Posterior cingulate gyrus (tissue), 11 donors: ENCODE measurements at regions of chr15 and their contacts with region 1.

Region 1: DNA sequence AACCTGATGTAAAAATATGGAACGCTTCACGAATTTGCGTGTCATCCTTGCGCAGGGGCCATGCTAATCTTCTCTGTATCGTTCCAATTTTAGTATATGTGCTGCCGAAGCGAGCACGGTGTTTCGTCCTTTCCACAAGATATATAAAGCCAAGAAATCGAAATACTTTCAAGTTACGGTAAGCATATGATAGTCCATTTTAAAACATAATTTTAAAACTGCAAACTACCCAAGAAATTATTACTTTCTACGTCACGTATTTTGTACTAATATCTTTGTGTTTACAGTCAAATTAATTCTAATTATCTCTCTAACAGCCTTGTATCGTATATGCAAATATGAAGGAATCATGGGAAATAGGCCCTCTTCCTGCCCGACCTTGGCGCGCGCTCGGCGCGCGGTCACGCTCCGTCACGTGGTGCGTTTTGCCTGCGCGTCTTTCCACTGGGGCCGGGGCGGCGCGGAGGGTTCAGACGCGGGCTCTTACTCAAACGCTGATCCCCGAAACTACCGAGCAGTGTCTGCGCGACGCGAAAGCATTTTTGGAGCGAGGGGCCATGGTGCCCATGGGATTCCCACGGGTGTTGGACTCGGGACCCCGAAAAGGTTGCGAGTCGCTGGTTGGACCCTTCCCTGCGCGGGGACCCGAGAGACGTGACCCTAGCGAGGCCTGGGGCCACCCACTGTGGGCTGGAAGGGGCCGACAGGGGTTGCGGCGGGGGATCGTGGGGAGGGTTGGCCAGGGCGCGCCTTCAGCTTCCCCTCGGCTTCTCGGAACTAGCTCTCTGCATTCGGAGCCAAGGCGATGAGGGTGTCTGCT is at the start of gene RNU6-1:
- DNase-seq: peak; percentile 91 to 99 (median 93)

Region 2: GRCh38 chr15:66946578-66947164 is 893.5 kb before region 1 on chr15:
- intact Hi-C with region 1: loop called (anchors 2 kb)
- DNase-seq: peak in 8 of 10 donors; percentile 59 to 94 (median 68)

Region 3: DNA sequence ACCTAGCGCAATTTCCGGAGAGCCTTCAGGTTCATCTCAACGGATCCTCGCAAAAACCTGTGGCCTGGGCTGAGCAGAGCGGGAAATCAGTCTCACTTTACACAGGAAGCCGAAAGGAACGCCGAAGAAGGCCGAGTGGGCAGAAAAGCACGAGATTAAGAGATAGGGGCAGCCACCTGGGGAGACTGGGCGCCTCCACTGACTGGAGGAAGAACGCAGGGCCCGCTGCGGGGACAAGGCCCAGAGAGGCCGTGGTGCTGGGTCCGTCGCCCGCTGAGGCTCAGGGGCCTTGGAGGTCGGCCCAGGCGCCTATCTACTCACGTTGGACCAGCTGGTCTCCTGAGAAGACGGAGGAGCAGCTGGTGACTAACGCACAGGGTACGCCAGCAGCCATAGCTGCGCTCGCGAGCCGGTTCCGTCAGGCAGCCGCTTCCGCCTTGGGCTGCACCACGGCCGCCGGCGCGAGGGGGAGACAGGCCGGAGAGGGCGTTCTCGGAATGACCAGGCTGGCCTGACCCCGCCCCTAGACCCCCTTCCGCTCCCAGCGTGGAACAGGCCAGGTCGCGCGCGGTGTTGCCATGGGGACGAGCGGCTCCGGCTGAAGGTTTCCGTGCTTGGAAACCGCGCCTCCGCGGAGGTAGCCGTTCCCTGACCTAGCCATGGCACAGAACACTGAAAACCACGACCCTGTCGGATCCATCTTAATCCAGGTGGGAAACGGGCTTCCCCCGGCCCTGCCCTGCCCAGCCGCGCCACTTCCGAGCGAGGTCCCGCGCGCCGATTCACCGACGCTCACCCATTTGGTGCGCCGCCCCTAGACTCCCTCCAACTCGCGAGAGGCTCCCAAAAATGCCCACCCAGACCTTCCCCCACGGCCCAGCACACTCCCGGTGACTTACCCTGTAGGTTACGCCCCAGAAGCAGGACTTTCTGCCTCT is 585.6 kb before region 1 on chr15 and contains the starts of genes AAGAB and IQCH:
- intact Hi-C with region 1: loop called (anchors 10 kb)
- DNase-seq: peak; percentile 93 to 100 (median 98)

Region 4: DNA sequence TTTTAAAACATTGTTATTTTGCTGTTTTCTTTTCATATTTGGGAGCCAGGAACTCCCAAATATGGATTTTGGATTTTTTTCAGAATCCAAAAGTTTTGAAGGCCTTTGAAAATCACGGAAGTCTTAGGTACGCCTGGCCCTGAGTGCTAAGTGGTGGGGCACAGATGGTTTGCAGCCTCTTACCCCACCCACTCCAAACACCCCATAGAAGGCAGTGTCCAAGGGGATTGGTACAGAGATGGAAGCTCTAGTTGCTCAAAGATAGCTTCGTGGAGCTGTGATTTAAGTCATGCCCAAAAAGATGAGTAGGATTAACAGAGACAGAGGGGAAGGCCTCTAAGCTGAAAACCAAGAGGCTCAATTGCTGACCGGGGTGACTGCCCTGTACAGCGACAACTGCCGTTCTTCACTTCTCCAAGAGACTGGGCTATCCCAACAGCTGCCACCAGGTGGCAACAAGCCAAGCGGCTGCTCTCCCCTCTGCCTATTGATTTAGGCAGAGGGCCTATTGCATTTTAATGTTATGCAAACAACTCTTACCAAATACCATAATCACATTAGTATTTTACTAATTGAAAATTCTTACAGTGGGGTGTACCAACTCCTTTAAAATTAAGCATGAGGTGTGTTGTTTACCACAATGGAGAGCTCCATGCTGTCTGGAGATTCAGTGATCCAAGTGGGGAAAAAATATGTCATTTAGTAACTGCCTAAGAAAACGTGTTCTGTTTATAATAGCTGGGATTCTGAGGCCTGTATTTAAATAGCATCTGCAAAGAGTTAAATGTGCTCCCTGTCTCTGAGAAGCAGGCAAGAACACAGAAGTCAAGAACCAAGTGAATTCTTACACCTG is 383.2 kb before region 1 on chr15:
- intact Hi-C with region 1: loop called (anchors 2 kb)
- DNase-seq: peak; percentile 45 to 96 (median 82)

Region 5: GRCh38 chr15:67501177-67501835 is 338.8 kb before region 1 on chr15:
- intact Hi-C with region 1: loop called (anchors 2 kb)
- DNase-seq: no peak

Region 6: DNA sequence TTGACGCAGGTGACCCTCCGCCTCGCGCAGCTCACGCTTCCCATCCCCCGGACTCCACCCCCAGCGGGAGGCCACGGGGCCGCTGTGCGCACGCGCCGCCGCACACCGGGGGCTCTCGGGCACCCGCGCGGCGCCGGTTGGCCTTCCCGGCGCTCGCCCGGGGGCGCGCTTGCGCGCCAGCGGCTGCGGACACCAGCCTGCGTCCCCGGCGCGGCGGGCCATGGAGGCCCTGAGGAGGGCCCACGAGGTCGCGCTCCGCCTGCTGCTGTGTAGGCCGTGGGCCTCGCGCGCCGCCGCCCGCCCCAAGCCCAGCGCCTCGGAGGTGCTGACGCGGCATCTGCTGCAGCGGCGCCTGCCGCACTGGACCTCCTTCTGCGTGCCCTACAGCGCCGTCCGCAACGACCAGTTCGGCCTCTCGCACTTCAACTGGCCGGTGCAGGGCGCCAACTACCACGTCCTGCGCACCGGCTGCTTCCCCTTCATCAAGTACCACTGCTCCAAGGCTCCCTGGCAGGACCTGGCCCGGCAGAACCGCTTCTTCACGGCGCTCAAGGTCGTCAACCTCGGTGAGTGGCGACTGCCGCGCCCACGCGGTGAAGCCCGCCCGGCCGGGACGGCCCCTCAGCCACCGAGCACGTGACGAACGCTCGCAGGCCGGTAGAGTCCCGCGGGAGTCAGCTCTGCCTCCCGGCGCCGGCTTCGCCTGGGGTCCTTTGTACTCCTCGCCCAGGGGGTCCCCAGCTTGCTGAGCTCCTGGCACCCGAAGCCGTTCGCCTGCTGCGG is 318.9 kb before region 1 on chr15 and contains the start of gene C15orf61:
- intact Hi-C with region 1: loop called (anchors 1 kb)
- DNase-seq: peak; percentile 78 to 97 (median 81)

Region 7: DNA sequence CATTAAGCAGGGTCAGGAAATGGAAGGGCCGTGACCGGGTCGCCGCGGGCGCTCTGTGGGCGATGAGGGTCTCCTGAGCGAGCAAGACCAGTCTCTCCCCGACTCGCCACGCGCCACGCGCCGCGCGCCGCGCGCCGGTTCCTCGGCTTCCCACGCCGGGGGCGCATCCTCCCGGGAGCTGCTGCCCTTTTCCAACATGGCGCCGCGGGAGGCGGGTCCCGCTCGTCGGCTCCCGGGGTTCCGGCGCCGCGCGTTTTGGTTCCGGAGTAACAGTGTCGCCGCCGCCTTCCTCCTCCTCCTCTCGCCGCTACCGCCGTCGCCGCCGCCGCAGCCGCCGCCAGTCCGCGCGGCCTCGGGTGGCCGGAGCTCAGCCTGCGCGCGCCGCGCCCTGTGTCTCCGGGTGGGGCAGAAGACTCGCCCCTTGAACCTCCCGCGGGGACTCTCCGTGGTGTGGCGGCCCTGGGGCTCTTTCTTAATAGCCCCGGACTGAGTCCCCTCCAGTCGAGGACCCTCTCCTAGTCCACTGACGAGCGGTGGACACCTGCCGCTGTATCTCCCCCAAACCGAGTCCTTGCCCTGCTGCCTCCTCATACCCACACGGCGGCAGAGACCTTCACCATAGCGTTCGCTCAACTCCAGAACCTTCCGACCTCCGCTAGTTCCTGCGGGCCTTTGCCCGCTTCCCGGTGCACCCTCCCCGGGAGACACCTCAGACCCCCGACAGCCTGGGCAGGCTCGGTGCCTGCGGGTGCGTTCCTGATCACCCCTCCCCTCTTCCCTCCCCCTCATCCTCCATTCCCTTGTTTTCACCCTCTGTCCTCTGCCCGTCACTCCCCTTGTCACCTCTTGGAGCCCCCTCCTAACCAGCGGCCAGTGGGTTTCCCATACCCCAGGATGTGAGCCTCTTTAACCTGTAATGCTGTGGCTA is 297.5 kb before region 1 on chr15 and contains the start of gene MAP2K5:
- intact Hi-C with region 1: loop called (anchors 1 kb)
- DNase-seq: peak; percentile 82 to 98 (median 90)

Region 8: DNA sequence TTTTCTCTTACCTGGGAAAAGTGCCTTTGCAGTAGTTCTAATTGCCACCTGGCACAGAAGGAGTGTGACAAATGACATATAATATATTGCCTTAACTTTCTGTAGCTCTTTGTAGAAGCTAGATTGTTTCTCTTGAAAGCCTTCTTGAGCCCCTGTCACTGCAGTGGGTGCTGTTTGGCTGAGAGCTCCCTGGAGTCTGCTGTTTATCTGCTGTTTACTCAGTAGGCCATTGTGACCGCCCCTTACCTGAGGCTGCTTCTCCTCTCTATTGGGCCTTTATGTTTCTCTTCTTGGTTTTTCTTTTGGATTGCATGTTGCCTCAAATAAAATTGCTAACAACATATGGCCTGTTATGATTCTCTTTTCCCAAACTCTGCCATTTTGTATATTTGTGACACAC is 281.0 kb before region 1 on chr15:
- intact Hi-C with region 1: no loop called
- DNase-seq: no peak

Region 9: DNA sequence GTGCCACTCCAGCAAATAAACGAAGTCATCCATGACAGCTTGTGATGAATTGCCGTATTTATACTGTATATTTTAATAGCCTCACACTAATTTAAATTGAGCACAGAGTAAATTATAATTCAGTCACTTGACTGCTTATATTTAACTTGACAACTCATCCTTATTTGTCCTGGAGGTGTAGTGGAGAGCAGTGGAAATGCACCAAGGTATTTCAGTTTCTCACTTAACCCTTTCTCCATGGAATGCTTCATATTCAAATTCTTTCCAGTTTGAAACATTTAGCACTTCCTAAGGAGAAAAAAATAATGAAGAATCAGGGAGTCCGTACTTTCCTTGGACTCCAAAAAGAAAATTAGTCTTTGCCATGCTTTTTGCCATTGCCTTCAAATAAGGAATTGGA is 198.7 kb before region 1 on chr15:
- intact Hi-C with region 1: no loop called
- DNase-seq: no peak

Region 10: DNA sequence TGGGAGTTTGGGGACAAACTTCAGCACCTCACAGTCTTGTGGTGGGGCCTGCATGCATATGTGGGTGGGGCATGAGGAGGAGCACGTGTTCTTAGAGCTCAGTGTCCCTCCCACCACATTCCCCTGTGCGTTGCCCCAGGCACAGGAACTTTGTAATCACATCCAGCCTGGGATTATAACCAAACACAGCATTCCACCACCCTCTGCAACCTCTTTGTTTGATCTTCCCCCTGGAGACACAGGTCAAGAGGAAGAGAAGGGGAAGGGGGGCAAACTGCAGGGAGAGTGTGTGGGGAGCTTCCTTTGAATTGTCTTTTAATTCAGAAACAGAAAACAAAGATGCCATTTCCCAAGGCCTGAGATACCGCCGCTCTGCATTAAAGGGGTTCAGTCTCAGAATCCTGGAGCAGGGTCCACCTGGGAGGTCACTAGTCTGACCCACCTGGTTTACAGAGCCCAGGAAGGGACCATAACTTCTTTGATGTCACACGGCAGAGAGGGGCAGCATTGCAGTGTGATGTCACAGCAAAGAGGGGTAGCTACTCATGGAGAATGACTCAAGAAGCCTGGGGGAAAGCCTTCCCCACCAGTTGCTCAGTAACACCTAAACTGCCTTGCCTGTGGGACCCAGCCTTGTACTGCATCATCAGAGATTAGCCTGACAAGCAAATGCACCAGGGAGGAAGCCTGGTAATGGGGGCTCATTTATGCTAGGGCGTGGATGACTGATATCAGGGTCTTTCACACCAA is 106.0 kb after region 1 on chr15:
- intact Hi-C with region 1: no loop called
- DNase-seq: no peak

Region 11: GRCh38 chr15:68187559-68187958 is 347.4 kb after region 1 on chr15:
- intact Hi-C with region 1: no loop called
- DNase-seq: peak in 4 of 10 donors; percentile 46 to 85 (median 68)